Ovary (tissue), 10 donors: ENCODE measurements at regions of chr15 and their contacts with region 1.

Region 1: DNA sequence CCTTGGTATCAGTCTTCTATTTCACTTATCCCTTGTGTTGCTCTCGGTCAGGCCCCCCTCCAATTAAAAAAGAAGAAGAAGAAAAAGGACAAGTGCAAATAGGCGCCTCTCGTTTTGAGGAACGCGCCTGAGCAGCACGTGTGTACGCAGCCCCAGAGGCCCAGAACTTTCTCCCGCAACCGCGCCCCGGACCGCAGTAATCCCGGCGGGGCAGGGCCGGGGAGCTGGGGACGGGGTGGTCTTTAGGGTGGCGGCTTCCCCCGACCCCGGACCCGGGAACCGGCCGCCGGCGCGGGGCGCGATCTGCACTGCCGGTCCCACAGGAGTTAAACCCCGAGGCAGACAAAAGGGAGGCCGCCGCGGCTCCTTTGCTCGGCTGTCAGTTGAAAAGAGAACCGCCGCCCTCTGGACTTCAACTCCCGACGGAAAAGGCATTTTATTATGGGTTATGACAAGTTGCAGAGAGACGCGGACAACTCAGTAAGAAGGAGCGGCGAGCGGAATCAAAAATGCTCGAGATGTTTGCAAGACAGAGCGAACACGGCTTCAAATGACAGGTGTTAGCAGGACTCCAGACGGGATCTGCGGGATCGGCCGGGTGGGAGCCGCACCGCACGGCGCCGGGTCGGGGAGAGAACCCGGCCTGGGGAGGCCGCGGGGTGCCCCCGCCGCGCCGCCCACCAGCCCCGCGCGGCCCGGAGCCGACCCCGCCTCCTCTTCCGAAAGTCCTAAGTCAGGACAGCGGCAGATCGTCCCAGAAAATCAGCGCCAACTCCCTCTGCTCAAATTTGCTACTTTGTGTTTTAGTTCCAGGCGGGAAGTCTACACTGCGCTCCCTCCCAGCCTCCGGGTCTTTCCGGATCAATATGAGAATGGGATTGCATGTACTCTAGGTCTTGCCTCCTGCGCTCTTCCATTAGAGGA is 79.0 kb downstream of the NR2F2 start:
- DNase-seq: peak in 1 of 5 donors; percentile 33
- H3K4me3 ChIP-seq: peak overlapping the region; percentile 17
- H3K27ac ChIP-seq: no peak overlapping the region
- H3K4me1 ChIP-seq: peaks cover 6% of the 10 kb centered on the region
- H3K27me3 ChIP-seq: no peaks in the 10 kb centered on the region
- CTCF ChIP-seq: no peak
- EP300 ChIP-seq: no peak
- POLR2A ChIP-seq: no peak

Region 2: GRCh38 chr15:96070626-96071025 is 338.9 kb before region 1 on chr15:
- intact Hi-C with region 1: no loop called
- DNase-seq: no peak
- H3K4me3 ChIP-seq: no peak overlapping the region
- H3K27ac ChIP-seq: no peak overlapping the region
- H3K4me1 ChIP-seq: peaks cover 3% of the 10 kb centered on the region
- H3K27me3 ChIP-seq: no peaks in the 10 kb centered on the region
- CTCF ChIP-seq: no peak
- EP300 ChIP-seq: no peak
- POLR2A ChIP-seq: no peak

Region 3: GRCh38 chr15:96353930-96354730 is 55.3 kb before region 1 on chr15:
- intact Hi-C with region 1: no loop called
- DNase-seq: peak; percentile 79 to 89 (median 84)
- H3K4me3 ChIP-seq: peak overlapping the region; percentile 68
- H3K27ac ChIP-seq: peak overlapping the region; percentile 91 to 99
- H3K4me1 ChIP-seq: peaks cover 25% of the 10 kb centered on the region
- H3K27me3 ChIP-seq: no peaks in the 10 kb centered on the region
- CTCF ChIP-seq: peak; percentile 44 to 84 (median 79)
- EP300 ChIP-seq: no peak
- POLR2A ChIP-seq: peak; percentile 27

Region 4: GRCh38 chr15:96365781-96366525 is 43.5 kb before region 1 on chr15:
- intact Hi-C with region 1: loop called in 2 of 4 experiments (anchors 5 to 10 kb)
- DNase-seq: no peak
- H3K4me3 ChIP-seq: no peak overlapping the region
- H3K27ac ChIP-seq: no peak overlapping the region
- H3K4me1 ChIP-seq: no peaks in the 10 kb centered on the region
- H3K27me3 ChIP-seq: no peaks in the 10 kb centered on the region
- CTCF ChIP-seq: no peak
- EP300 ChIP-seq: no peak
- POLR2A ChIP-seq: no peak